ENCODE measurements at regions of chr20 and their contacts with region 1.

Region 1: GRCh38 chr20:17995967-17996819 is 27.4 kb downstream of the MGME1 start:
- DNase-seq: peak; percentile 87
- H3K4me3 Mint-ChIP-seq: no peak overlapping the region
- H3K27ac Mint-ChIP-seq: no peak overlapping the region
- H3K4me1 Mint-ChIP-seq: peaks cover 38% of the 10 kb centered on the region
- H3K27me3 Mint-ChIP-seq: peaks cover 3% of the 10 kb centered on the region

Region 2: GRCh38 chr20:17109307-17109706 is 886.9 kb before region 1 on chr20:
- intact Hi-C with region 1: no loop called
- DNase-seq: no peak
- H3K4me3 Mint-ChIP-seq: no peak overlapping the region
- H3K27ac Mint-ChIP-seq: no peak overlapping the region
- H3K4me1 Mint-ChIP-seq: no peaks in the 10 kb centered on the region
- H3K27me3 Mint-ChIP-seq: no peaks in the 10 kb centered on the region

Region 3: GRCh38 chr20:17504898-17505635 is 491.1 kb before region 1 on chr20:
- intact Hi-C with region 1: loop called (anchors 1 kb)
- DNase-seq: peak; percentile 90
- H3K4me3 Mint-ChIP-seq: peak overlapping the region; percentile 88
- H3K27ac Mint-ChIP-seq: peak overlapping the region; percentile 92
- H3K4me1 Mint-ChIP-seq: peaks cover 47% of the 10 kb centered on the region
- H3K27me3 Mint-ChIP-seq: peaks cover 4% of the 10 kb centered on the region

Region 4: DNA sequence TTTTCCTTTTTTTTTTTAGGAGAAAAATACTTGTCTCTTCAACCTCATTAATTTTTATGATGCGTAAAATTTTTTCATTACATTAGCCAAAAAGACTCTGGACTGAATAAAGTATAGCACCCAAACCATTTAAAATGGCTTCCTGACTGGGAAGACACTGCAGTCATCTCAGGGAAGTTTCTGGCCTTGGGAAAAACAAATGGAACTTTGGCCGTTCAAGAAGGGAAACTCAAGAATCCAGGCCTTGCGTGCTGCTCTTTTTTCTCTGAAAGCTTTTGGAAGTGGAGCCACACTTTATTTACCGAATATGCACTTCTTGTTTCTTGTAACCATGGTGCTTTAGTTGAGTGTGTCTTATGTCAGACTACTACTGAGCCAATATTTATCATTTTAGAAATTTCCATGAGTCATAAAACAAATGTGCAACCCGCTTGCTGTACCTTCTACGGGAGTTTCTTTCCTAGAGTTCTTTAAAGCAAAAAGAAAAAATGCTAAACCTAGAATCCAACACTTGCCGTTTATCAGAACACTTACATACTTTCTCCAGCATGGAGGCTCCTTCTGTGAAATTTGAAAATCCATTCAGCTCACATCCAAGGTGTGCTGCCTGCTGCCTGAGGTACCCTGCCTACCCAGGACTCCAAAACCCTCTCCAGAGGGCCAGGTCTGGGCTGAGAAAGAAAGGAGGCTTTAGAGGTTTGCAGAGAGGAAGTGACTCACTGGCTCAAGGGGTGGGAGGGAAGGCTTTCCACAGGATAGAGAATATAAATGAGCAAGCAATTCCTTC is 437.8 kb before region 1 on chr20:
- intact Hi-C with region 1: loop called (anchors 1 kb)
- DNase-seq: peak; percentile 71
- H3K4me3 Mint-ChIP-seq: peak overlapping the region; percentile 74
- H3K27ac Mint-ChIP-seq: peak overlapping the region; percentile 97
- H3K4me1 Mint-ChIP-seq: peaks cover 36% of the 10 kb centered on the region
- H3K27me3 Mint-ChIP-seq: no peaks in the 10 kb centered on the region

Region 5: DNA sequence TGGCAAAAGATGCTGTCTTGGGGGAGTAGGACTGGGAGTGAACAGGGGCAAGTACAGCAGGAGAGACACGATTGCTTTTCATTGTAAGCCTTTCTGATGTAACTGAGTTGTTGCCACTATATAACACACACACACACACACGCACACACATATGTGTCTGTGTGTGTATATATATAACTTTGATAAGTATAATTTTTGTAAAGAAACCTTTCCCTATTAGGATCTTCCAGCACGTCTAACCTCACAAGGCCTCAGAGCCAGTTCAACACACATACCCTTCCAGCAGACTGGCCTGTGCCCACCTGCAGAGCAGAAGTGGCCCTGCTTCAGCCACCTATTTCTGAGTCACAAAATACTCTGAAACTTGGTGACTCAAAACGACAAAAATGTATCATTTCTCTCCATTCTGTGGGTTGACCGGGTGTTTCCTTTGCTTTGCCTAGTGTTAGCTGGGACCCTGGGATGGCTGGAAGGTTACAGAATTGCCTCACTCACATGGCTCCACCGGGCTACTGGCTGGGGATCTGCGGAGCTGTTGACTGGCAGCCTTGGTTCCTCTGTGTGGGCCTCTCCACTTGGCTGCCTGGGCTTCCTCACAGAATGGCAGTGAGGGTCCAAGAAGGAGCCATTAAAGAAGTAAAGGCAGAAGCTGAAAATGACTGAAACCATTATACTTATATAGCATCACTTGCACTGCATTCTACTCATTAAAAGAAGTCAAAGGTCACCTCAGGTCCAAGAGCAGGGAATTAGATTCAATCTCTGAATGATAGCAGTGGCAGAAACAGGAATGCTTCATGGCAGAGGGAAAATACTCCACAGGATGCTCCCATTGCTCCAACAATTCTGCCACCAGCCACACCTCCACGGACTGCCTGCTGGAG is 170.0 kb before region 1 on chr20:
- intact Hi-C with region 1: loop called (anchors 1 kb)
- DNase-seq: peak; percentile 58
- H3K4me3 Mint-ChIP-seq: no peak overlapping the region
- H3K27ac Mint-ChIP-seq: peak overlapping the region; percentile 7
- H3K4me1 Mint-ChIP-seq: peaks cover 9% of the 10 kb centered on the region
- H3K27me3 Mint-ChIP-seq: no peaks in the 10 kb centered on the region

Region 6: GRCh38 chr20:17916433-17916891 is 79.7 kb before region 1 on chr20:
- intact Hi-C with region 1: no loop called
- DNase-seq: no peak
- H3K4me3 Mint-ChIP-seq: no peak overlapping the region
- H3K27ac Mint-ChIP-seq: no peak overlapping the region
- H3K4me1 Mint-ChIP-seq: no peaks in the 10 kb centered on the region
- H3K27me3 Mint-ChIP-seq: peaks cover 21% of the 10 kb centered on the region

Region 7: GRCh38 chr20:17958373-17959256 is 37.6 kb before region 1 on chr20:
- intact Hi-C with region 1: loop called (anchors 2 kb)
- DNase-seq: no peak
- H3K4me3 Mint-ChIP-seq: peak overlapping the region; percentile 44
- H3K27ac Mint-ChIP-seq: peak overlapping the region; percentile 71
- H3K4me1 Mint-ChIP-seq: peaks cover 76% of the 10 kb centered on the region
- H3K27me3 Mint-ChIP-seq: no peaks in the 10 kb centered on the region

Region 8: GRCh38 chr20:18032977-18033892 is 37.0 kb after region 1 on chr20:
- intact Hi-C with region 1: no loop called
- DNase-seq: no peak
- H3K4me3 Mint-ChIP-seq: no peak overlapping the region
- H3K27ac Mint-ChIP-seq: no peak overlapping the region
- H3K4me1 Mint-ChIP-seq: no peaks in the 10 kb centered on the region
- H3K27me3 Mint-ChIP-seq: no peaks in the 10 kb centered on the region

Measured in activated CD4-positive, alpha-beta T cell treated with anti-CD3 and anti-CD28 coated beads, Interleukin-2, amount 10 ng/mL, durations not matched to agents 24 days and 14 days (primary cell).